ENCODE measurements at regions of chr19 and their contacts with region 1.

Region 1: GRCh38 chr19:54532528-54532927 is 29.9 kb downstream of the LAIR2 start:
- DNase-seq: peak; percentile 8 to 35 (median 20)
- H3K4me3 ChIP-seq: peak overlapping the region in 1 of 3 experiments; percentile 28
- H3K4me3 Mint-ChIP-seq: peak overlapping the region in 1 of 2 donors; percentile 56
- H3K27ac ChIP-seq: no peak overlapping the region
- H3K27ac Mint-ChIP-seq: peak overlapping the region in 2 of 7 donors; percentile 3 to 33
- H3K4me1 ChIP-seq: peaks cover 15 to 29% of the 10 kb centered on the region in 2 donors
- H3K4me1 Mint-ChIP-seq: peaks cover 34% of the 10 kb centered on the region
- H3K27me3 ChIP-seq: peaks cover 2 to 24% of the 10 kb centered on the region in 2 donors
- H3K27me3 Mint-ChIP-seq: peaks cover 31 to 44% (median 31%) of the 10 kb centered on the region in 3 donors
- CTCF ChIP-seq: no peak

Region 2: DNA sequence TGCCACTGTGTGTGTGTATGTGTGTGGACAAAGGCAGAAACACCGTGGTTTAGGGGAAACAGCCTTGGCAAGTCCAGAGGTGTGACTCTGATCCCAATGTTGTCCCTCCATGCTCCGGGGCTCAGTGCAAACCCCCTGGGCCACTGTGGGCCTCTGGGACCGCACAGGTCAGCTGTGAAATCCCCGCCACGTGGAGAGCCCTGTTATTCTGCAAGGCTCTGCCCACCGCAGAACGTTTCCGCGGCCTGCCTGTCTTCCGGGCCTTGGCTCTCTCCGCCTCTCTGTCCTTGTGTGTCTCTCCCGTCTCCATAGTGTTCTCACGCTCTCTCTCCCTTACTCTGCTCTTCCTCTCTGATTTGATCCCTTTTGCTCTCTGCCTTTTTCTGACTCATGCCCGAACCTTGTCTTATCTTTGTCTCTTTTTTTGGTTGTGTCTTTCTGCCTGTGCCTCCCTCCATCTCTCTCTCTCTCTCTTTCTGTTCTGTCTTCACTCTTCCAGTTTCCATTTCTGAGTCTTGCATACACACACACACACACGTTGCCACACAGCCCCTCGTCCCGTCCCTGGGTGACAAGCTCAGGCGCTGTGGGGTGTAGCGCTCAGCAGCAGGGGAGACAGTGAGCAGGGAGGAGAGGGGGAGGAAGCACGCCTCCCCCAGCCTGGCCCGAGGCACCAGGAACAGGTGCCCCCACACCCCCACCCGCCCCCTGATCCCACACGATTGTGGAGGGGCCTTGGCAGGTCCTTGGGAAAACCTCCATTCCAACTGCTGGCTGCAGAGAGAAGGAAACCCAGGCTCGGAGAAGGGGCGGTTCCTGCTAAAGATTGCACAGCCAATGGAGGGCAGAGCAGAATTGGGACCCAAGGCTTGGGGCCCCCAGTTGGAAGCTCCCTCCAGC is 114.2 kb before region 1 on chr19:
- intact Hi-C with region 1: loop called in 1 of 2 experiments (anchors 10 kb)
- DNase-seq: no peak
- H3K4me3 ChIP-seq: peak overlapping the region in 1 of 3 experiments; percentile 21
- H3K4me3 Mint-ChIP-seq: peak overlapping the region; percentile 65 to 83
- H3K27ac ChIP-seq: no peak overlapping the region
- H3K27ac Mint-ChIP-seq: peak overlapping the region in 3 of 7 donors; percentile 6 to 14 (median 7)
- H3K4me1 ChIP-seq: peaks cover 12 to 15% of the 10 kb centered on the region in 2 donors
- H3K4me1 Mint-ChIP-seq: peaks cover 14% of the 10 kb centered on the region
- H3K27me3 ChIP-seq: peaks cover 28 to 68% of the 10 kb centered on the region in 2 donors
- H3K27me3 Mint-ChIP-seq: peaks cover 47 to 70% (median 53%) of the 10 kb centered on the region in 3 donors
- CTCF ChIP-seq: no peak

Region 3: GRCh38 chr19:54485851-54486250 is 46.7 kb before region 1 on chr19:
- intact Hi-C with region 1: no loop called
- DNase-seq: no peak
- H3K4me3 ChIP-seq: no peak overlapping the region
- H3K4me3 Mint-ChIP-seq: peak overlapping the region in 1 of 2 donors; percentile 85
- H3K27ac ChIP-seq: no peak overlapping the region
- H3K27ac Mint-ChIP-seq: no peak overlapping the region
- H3K4me1 ChIP-seq: peaks cover 11 to 15% of the 10 kb centered on the region in 2 donors
- H3K4me1 Mint-ChIP-seq: peaks cover 17% of the 10 kb centered on the region
- H3K27me3 ChIP-seq: peaks cover 49 to 86% of the 10 kb centered on the region in 2 donors
- H3K27me3 Mint-ChIP-seq: peaks cover 74 to 83% (median 78%) of the 10 kb centered on the region in 3 donors
- CTCF ChIP-seq: no peak

Region 4: GRCh38 chr19:54502518-54503048 is 29.9 kb before region 1 on chr19 and contains the start of gene LAIR2:
- intact Hi-C with region 1: no loop called
- DNase-seq: no peak
- H3K4me3 ChIP-seq: peak within 1 kb of the TSS in 2 of 3 experiments; percentile 27 to 34
- H3K4me3 Mint-ChIP-seq: peak within 1 kb of the TSS in 1 of 2 donors; percentile 53
- H3K27ac ChIP-seq: peak within 1 kb of the TSS in 1 of 2 donors; percentile 67
- H3K27ac Mint-ChIP-seq: peak within 1 kb of the TSS in 1 of 7 donors; percentile 11
- H3K4me1 ChIP-seq: peaks cover 4 to 5% of the 10 kb centered on the region in 2 donors
- H3K4me1 Mint-ChIP-seq: peaks cover 11% of the 10 kb centered on the region
- H3K27me3 ChIP-seq: peaks cover 25 to 69% of the 10 kb centered on the region in 2 donors
- H3K27me3 Mint-ChIP-seq: peaks cover 58 to 77% (median 58%) of the 10 kb centered on the region in 3 donors
- CTCF ChIP-seq: no peak
- polyA plus RNA-seq, gene LAIR2: 0.38 TPM in 1 of 3 donors, not detected in the others